ENCODE measurements at regions of chr3 and their contacts with region 1.

Region 1: DNA sequence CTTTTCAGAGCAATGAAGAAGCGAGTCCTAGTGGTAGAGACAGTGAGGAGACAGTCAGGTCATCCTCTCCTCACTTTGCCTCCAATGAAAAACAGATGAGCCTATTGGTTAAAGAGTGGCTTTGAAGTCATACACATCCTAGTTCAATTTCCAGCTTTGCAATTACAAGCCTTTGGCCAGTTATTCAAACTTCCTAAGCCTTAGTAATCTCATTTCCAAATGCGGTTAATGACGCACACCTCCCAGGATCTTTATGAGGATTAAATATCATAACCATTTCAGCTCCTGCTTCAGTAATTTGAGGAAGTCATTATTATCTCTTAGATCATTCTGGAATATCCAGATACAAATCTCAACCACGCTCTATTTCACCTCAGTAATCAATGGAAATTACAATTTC is 10.0 kb upstream of the ST6GAL1 start:
- DNase-seq: no peak
- ATAC-seq: no peak

Region 2: GRCh38 chr3:186361762-186362536 is 558.4 kb before region 1 on chr3 and contains the start of gene DGKG:
- intact Hi-C with region 1: no loop called
- DNase-seq: peak; percentile 85
- ATAC-seq: peak; percentile 81
- total RNA-seq, gene DGKG: 30.8 TPM

Region 3: GRCh38 chr3:186790261-186790981 is 129.9 kb before region 1 on chr3:
- intact Hi-C with region 1: no loop called
- DNase-seq: no peak
- ATAC-seq: peak; percentile 13

Region 4: GRCh38 chr3:186849374-186849975 is 70.8 kb before region 1 on chr3:
- intact Hi-C with region 1: loop called (anchors 10 kb)
- DNase-seq: no peak
- ATAC-seq: peak; percentile 80

Measured in Right ventricle myocardium superior (tissue), 1 donor.